AG04450 (cell line): ENCODE measurements at regions of chr14 and their contacts with region 1.

Region 1: DNA sequence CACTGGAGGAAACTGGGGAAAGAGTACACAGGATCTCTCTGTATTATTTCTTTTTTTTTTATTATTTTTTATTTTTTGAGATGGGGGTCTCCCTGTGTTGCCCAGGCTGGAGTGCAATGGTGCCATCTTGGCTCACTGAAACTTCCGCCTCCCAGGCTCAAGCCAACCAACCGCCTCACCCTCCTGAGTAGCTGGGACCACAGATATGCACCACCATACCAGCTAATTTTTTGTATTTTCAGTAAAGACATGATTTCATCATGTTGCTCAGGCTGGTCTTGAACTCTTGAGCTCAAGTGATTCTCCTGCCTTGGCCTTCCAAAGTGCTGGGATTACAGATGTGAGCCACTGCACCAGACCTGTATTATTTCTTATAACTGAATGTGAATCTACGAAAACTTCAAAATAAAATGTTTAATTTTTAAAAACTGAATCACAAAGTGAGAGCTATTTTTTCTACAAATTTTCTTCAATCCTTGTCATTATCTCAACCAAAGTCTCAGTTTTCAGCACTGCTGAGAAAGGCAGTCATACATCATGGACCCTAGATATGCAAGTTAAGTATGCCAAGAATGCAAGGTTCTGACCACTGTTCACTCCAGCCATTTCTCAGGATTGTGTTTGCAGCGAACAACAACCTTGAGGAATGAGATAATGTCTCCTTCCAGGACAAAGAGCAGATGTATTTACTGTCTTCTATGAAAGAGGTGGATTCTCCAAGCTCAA is 2.4 kb downstream of the EAPP start:
- DNase-seq: peak; percentile 42
- H3K4me3 ChIP-seq: peak overlapping the region; percentile 44
- H3K27ac ChIP-seq: peak overlapping the region; percentile 65
- H3K27me3 ChIP-seq: no peaks in the 10 kb centered on the region
- CTCF ChIP-seq: no peak

Region 2: GRCh38 chr14:34548472-34548981 is 11.4 kb after region 1 on chr14:
- CTCF ChIA-PET with region 1: no interaction called
- POLR2A ChIA-PET with region 1: interaction called, 13 read pairs
- DNase-seq: no peak
- H3K4me3 ChIP-seq: no peak overlapping the region
- H3K27ac ChIP-seq: peak overlapping the region; percentile 21
- H3K27me3 ChIP-seq: no peaks in the 10 kb centered on the region
- CTCF ChIP-seq: no peak

Region 3: DNA sequence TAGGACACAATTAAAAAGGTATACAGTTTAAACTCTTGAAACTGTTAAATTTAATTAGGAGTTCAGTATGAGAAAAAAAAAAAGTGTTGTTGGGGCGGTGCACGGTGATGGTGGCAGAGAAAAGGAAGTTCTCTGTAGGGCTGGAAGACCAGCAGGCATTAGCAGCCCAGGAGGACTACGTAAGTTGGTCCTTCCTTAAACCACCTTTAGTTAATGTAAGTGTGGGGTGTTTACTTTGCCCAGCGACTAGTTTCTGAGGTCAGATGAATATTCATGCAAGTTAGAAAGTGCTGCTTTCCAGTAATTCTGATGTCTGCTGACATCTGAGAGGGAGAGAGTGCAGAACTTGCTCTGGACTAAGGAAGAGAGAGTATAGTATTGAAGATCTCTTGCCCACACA is 1928.1 kb after region 1 on chr14:
- CTCF ChIA-PET with region 1: no interaction called
- POLR2A ChIA-PET with region 1: no interaction called
- DNase-seq: no peak
- H3K4me3 ChIP-seq: no peak overlapping the region
- H3K27ac ChIP-seq: no peak overlapping the region
- H3K27me3 ChIP-seq: no peaks in the 10 kb centered on the region
- CTCF ChIP-seq: no peak